Activated T-helper 1 cell treated with anti-CD3 and anti-CD28 coated beads, Interleukin-12 subunit alpha, Interleukin-12 subunit beta, Interleukin-2, Interleukin-4 antibody, amounts not matched to agents 30 ng/mL and 10 ng/mL and 1 ng/mL, durations not matched to agents 14 hours and 24 hours and 36 hours (primary cell): ENCODE measurements at regions of chr14 and their contacts with region 1.

Region 1: GRCh38 chr14:69675877-69676416 is 64.6 kb downstream of the SUSD6 start:
- DNase-seq: peak; percentile 54
- H3K4me3 Mint-ChIP-seq: peak overlapping the region; percentile 68
- H3K27ac Mint-ChIP-seq: peak overlapping the region; percentile 98
- H3K4me1 Mint-ChIP-seq: peaks cover 78% of the 10 kb centered on the region
- H3K27me3 Mint-ChIP-seq: no peaks in the 10 kb centered on the region

Region 2: GRCh38 chr14:69260861-69261564 is 414.9 kb before region 1 on chr14:
- intact Hi-C with region 1: no loop called
- DNase-seq: peak; percentile 16
- H3K4me3 Mint-ChIP-seq: peak overlapping the region; percentile 65
- H3K27ac Mint-ChIP-seq: no peak overlapping the region
- H3K4me1 Mint-ChIP-seq: peaks cover 6% of the 10 kb centered on the region
- H3K27me3 Mint-ChIP-seq: peaks cover 52% of the 10 kb centered on the region

Region 3: DNA sequence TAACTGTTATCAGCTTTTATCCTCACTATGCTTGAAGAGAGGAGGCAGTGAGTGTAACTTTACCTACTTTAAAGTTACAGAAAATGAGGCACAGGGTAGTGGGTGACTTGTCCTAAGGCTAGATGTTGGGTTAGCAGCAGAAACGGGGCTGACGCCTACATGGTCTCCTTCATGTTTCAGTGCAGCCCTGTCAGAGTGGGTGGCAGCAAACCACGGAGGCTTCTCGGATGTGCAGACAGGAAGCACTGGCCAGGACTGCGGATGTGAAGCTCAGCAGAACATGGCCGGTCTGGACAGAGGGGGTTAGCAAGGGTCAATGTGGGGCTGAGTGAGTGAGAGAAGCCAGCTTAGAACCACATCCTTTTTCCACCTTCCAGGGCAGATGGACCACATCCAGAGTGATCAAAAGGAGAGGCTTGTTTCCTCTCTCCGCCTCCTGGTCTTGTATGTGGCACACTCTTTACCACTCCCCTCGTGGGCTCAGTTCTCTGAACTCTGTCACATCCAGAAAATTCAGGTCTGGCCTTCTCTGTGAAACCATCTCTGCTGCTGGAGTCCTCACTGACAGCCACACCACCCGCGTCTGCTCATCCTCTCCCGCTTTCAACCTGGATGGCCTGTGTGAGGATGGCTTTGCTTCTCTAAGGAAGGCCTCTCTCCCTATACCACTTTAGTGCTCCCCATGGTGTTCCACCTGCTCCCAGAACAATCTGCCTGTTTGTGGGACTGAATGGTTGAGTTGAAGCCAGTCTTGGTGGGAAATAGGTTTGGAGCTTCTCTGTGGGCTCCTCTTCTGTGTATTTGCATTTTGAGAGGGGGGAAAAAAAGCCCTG is 50.4 kb before region 1 on chr14:
- intact Hi-C with region 1: loop called (anchors 2 kb)
- DNase-seq: peak; percentile 75
- H3K4me3 Mint-ChIP-seq: peak overlapping the region; percentile 76
- H3K27ac Mint-ChIP-seq: peak overlapping the region; percentile 92
- H3K4me1 Mint-ChIP-seq: peaks cover 94% of the 10 kb centered on the region
- H3K27me3 Mint-ChIP-seq: no peaks in the 10 kb centered on the region

Region 4: DNA sequence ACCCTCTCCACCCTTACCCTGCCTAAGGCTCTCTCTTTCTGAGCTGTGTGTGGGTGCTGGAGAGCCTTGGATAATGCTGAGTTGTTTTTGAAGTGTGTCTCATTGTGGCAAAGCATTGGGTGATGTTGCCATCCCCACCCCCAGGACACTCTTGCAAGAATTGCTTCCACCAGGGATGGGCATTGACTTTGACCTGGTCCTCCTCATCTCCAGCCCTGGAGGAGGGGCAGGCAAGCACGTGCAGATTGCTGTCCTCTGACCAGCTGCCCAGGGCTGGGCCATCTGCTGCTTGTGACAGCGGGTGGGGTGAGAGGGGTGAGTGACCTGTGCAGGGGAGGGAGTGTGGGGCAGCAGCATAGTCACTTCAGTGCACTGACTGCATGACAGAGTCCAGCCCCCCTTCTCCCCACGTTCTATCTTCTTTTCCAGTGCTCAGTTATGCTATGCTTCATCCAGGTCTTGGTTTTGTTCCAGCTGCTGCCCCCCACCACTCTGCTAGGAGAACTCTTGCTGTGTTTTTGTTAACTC is 38.4 kb before region 1 on chr14:
- intact Hi-C with region 1: loop called (anchors 1 kb)
- DNase-seq: no peak
- H3K4me3 Mint-ChIP-seq: peak overlapping the region; percentile 52
- H3K27ac Mint-ChIP-seq: peak overlapping the region; percentile 96
- H3K4me1 Mint-ChIP-seq: peaks cover 76% of the 10 kb centered on the region
- H3K27me3 Mint-ChIP-seq: no peaks in the 10 kb centered on the region

Region 5: DNA sequence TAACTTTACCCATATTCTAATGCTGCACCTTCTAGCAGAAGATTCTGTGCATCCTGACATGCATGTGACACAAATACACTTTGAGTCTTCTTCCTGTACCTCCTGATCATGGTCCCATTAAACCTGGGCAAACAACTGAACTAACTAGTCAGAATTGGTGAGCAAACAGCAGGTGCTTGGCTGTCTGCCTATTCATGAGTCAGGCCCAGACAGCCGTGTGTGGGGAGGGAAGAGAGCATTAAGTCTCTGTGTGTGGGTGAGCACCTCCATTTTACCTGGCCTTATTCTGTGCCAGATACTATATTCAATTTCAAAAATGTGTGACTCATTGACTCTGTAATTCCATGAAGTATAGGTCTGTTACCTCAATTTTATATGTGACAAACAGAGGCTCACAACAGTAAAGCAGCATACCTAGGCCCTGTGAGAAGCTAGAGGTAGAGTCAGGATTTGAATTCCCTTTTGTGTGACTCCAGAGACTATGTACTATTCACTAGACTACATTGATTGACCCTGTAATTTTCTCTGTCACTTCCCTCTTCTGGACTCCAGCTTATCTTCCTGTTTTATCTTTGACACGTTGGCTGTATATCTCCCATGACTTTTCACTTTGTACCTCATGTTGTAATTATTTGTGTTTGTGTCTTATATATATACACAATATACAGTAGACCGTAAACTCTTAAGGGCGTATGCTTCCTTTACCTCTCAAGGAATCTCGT is 32.3 kb before region 1 on chr14:
- intact Hi-C with region 1: loop called (anchors 1 kb)
- DNase-seq: no peak
- H3K4me3 Mint-ChIP-seq: peak overlapping the region; percentile 7
- H3K27ac Mint-ChIP-seq: peak overlapping the region; percentile 83
- H3K4me1 Mint-ChIP-seq: peaks cover 72% of the 10 kb centered on the region
- H3K27me3 Mint-ChIP-seq: no peaks in the 10 kb centered on the region

Region 6: DNA sequence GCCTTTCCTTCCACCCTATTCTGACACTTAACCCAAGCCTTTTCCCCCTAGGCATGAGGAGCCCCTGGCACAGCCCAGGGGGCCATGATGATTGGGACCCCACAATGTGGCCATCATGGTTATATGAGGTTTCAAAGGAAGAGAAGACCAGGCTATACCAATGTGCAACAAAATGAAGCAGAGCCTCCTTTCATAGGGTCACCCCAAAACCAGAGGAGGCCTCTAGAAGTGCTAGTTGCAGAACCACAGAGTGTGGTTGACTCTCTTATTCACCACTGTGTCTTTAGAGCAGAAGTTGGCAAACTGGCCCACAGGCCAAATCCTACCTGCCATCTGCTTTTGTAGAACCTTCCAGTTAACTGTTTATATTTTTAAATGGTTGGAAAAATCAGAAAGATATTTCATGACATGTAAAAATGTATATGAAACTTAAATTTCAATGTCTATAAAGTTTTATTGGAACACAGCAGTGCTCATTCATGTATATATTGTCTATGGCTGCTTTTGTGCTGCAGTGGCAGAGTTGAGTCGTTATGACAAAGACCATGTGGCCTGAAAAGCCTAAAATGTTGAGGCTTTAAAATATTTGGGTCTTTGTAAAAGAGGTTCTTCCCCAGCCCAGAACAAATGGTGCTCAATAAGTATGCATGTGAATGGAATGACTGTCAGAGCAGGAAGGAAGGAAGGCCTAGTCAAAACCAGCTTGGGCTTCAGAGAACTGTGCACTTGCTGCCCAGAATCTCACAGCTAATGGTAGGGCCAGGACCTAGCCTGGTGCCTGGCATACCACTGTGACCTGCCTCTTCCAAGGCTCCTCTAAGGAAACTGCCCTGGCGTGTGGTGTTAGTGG is 15.4 kb before region 1 on chr14:
- intact Hi-C with region 1: loop called (anchors 1 kb)
- DNase-seq: no peak
- H3K4me3 Mint-ChIP-seq: peak overlapping the region; percentile 43
- H3K27ac Mint-ChIP-seq: peak overlapping the region; percentile 85
- H3K4me1 Mint-ChIP-seq: peaks cover 87% of the 10 kb centered on the region
- H3K27me3 Mint-ChIP-seq: no peaks in the 10 kb centered on the region

Region 7: DNA sequence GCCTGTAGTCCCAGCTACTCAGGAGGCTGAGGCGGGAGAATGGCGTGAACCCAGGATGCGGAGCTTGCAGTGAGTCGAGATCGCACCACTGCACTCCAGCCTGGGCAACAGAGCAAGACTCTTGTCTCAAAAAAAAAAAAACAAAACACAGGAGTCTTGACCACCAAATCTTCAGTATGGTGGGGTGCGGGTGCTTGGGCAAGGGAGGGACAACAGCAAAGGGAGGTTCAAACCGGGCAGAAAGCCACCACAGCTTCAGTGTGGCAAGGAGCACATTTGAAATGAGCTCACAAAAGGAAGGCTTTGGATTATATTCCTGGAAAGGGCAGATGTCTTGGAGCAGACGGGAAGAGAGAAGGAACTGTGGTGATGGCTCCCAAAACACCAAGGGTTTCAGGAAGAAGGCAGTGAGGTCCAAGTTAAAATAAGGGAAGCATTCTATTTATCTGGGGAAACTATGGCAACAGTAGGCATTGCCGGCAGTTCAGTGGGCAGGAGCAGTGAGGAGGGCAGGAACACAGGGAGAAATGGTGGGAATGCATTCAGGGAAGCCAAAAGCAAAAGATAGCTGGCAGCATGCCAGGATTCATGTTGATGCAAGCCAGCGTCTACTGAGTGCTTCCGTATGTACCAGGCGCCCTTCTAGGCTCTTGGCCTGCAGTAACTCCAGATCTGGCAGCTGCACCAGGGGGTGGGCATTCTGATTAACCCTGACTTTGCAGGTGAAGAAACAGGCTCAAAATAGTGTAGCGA is 40.0 kb after region 1 on chr14:
- intact Hi-C with region 1: loop called (anchors 1 kb)
- DNase-seq: no peak
- H3K4me3 Mint-ChIP-seq: peak overlapping the region; percentile 46
- H3K27ac Mint-ChIP-seq: peak overlapping the region; percentile 92
- H3K4me1 Mint-ChIP-seq: peaks cover 94% of the 10 kb centered on the region
- H3K27me3 Mint-ChIP-seq: no peaks in the 10 kb centered on the region

Region 8: DNA sequence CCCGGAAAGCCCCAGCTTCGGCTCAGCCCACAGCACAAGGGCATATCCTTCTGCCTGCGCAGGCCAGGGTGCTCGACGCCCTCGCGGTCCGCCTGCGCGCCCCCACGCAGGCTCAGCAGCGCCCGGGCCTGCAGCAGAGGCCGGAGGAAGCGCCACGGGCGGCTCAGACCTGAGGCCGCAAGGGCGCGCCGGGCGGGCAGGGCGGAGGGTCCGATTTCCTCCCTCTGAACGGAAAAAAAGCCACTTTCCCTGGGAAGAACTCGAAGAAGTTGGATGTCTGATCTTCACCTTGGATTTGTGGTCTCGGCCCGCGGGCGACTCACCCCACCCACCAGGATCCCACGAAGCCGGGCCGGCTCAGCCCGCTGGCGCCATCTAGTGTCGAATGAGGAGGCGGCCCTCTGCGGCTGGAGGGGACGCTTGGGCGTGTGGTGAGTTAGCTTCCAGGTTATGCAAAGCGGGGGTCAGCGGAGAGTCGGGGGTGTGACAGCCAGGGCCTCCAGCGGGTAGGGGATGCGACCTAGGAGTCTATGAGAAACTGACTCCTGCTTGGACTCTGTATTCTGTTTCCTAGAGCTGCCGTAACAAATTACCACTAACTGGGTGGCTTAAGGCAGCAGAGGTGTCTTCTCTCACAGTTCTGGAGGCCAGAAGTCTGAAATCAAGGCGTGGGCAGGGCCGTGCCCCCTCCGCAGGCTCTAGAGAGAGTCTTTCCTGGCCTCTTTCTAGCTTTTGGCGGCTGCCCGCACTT is 51.0 kb after region 1 on chr14:
- intact Hi-C with region 1: loop called (anchors 1 kb)
- DNase-seq: peak; percentile 76
- H3K4me3 Mint-ChIP-seq: peak overlapping the region; percentile 72
- H3K27ac Mint-ChIP-seq: peak overlapping the region; percentile 74
- H3K4me1 Mint-ChIP-seq: peaks cover 38% of the 10 kb centered on the region
- H3K27me3 Mint-ChIP-seq: no peaks in the 10 kb centered on the region